Activated T-helper 2 cell treated with anti-CD3 and anti-CD28 coated beads, Interferon-gamma antibody, Interleukin-2, Interleukin-4, amounts not matched to agents 10 μg/mL and 5 μg/mL and 100 μg/mL, durations not matched to agents 14 hours and 24 hours and 36 hours (primary cell): ENCODE measurements at regions of chr9 and their contacts with region 1.

Region 1: DNA sequence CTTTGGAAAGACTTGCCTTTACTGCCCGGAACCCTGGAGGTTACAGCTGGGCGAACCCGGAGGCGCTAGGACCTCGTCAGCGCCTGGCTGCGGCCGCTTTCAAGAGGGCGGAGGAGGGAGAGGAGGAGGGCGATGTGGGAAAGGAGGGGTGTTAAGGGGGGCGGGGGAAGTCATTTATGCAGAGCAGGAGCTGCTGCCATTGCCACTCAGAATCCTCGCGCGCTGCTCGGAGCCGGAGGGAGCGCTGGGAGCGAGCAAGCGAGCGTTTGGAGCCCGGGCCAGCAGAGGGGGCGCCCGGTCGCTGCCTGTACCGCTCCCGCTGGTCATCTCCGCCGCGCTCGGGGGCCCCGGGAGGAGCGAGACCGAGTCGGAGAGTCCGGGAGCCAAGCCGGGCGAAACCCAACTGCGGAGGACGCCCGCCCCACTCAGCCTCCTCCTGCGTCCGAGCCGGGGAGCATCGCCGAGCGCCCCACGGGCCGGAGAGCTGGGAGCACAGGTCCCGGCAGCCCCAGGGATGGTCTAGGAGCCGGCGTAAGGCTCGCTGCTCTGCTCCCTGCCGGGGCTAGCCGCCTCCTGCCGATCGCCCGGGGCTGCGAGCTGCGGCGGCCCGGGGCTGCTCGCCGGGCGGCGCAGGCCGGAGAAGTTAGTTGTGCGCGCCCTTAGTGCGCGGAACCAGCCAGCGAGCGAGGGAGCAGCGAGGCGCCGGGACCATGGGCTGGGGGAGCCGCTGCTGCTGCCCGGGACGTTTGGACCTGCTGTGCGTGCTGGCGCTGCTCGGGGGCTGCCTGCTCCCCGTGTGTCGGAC is at the start of gene PCSK5:
- DNase-seq: peak; percentile 77
- H3K4me3 Mint-ChIP-seq: peak within 1 kb of the TSS; percentile 92
- H3K27ac Mint-ChIP-seq: peak within 1 kb of the TSS; percentile 32
- H3K4me1 Mint-ChIP-seq: peaks cover 24% of the 10 kb centered on the region
- H3K27me3 Mint-ChIP-seq: peaks cover 55% of the 10 kb centered on the region
- total RNA-seq, gene PCSK5: 1.5 TPM in 2 replicates

Region 2: GRCh38 chr9:75962013-75962661 is 71.5 kb after region 1 on chr9:
- intact Hi-C with region 1: no loop called
- DNase-seq: no peak
- H3K4me3 Mint-ChIP-seq: no peak overlapping the region
- H3K27ac Mint-ChIP-seq: no peak overlapping the region
- H3K4me1 Mint-ChIP-seq: peaks cover 8% of the 10 kb centered on the region
- H3K27me3 Mint-ChIP-seq: no peaks in the 10 kb centered on the region

Region 3: DNA sequence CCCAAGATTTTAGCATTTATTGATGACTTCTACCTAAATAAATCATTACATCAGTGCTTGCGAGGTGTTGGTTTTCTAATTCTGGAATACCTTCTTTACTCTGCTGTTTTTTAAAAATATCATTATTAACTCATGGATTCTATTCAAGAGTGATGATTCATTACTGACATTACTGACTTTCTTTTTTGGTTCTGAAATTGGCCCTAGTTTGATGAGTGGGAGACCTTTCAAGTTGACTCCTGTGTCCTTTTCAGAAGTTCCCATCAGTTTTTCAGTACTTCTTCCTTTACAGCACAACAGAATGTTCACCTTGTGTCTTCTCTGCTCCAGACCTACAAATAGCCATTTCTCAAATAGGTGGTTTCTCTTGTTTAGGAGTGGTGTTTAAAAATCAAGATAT is 113.9 kb after region 1 on chr9:
- intact Hi-C with region 1: loop called (anchors 5 kb)
- DNase-seq: no peak
- H3K4me3 Mint-ChIP-seq: no peak overlapping the region
- H3K27ac Mint-ChIP-seq: peak overlapping the region; percentile 40
- H3K4me1 Mint-ChIP-seq: peaks cover 21% of the 10 kb centered on the region
- H3K27me3 Mint-ChIP-seq: peaks cover 7% of the 10 kb centered on the region

Region 4: GRCh38 chr9:76023715-76024195 is 133.1 kb after region 1 on chr9:
- intact Hi-C with region 1: loop called (anchors 5 kb)
- DNase-seq: peak; percentile 32
- H3K4me3 Mint-ChIP-seq: peak overlapping the region; percentile 64
- H3K27ac Mint-ChIP-seq: peak overlapping the region; percentile 70
- H3K4me1 Mint-ChIP-seq: peaks cover 79% of the 10 kb centered on the region
- H3K27me3 Mint-ChIP-seq: no peaks in the 10 kb centered on the region

Region 5: GRCh38 chr9:76530458-76531110 is 639.9 kb after region 1 on chr9:
- intact Hi-C with region 1: no loop called
- DNase-seq: no peak
- H3K4me3 Mint-ChIP-seq: no peak overlapping the region
- H3K27ac Mint-ChIP-seq: no peak overlapping the region
- H3K4me1 Mint-ChIP-seq: peaks cover 15% of the 10 kb centered on the region
- H3K27me3 Mint-ChIP-seq: no peaks in the 10 kb centered on the region